Right ventricle myocardium superior (tissue), 1 donor: ENCODE measurements at regions of chr1 and their contacts with region 1.

Region 1: GRCh38 chr1:25223471-25223870 is 8.8 kb downstream of the SYF2 start:
- DNase-seq: no peak
- ATAC-seq: no peak

Region 2: DNA sequence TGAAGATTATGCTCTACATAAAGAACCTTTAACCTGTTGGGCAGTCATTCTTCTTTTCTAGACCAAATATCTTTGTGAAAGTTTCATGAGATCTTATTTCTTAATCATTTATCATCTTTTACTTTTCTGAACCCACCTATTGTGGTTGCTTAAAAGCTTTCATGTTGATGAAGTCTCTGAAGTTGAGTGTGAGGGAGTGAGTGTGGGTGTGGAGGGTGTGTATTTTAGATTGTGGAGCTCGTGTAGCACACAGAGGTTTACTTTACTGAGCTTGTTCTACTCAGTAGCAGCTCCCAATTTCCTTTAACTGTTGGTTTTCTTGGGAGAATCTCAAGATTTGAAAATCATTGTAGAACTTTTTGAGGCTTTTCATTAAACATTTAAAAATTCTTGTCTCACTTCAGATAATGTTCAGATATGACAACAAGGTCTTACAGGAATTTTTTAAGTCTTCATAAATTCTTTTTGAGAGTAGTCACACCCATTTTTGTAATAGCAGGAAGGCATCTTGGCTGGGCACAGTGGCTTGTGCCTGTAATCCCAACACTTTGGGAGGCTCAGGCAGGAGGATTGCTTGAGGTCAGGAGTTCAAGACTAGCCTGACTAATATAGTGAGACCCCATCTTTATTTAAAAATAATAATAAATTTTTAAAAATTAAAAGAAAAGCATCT is 563.3 kb before region 1 on chr1:
- intact Hi-C with region 1: loop called (anchors 10 kb)
- DNase-seq: no peak
- ATAC-seq: no peak

Region 3: DNA sequence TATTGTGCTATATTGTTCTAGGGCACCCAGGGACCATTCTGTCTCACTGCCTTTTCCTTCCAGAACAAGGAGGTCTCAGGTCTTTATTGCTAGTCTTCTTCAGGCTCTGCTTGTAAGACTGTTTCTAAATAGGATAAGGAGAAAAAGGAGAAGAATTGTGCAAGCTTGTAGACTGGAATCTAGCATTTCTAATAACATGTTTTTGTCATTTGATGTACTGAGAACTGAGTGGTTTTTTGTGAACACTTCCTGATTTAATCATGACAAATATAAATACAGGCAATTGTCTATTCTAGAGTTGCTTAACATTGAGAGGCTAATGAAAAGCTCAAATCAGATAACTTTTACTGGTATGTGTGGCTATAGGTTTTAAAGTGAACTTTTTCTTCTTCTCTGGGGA is 400.6 kb before region 1 on chr1:
- intact Hi-C with region 1: no loop called
- DNase-seq: no peak
- ATAC-seq: no peak

Region 4: GRCh38 chr1:25095635-25096200 is 127.8 kb before region 1 on chr1:
- intact Hi-C with region 1: no loop called
- DNase-seq: no peak
- ATAC-seq: no peak

Region 5: GRCh38 chr1:25117233-25117823 is 106.1 kb before region 1 on chr1:
- intact Hi-C with region 1: no loop called
- DNase-seq: no peak
- ATAC-seq: no peak